Stomach (tissue), 19 donors: ENCODE measurements at regions of chr11 and their contacts with region 1.

Region 1: GRCh38 chr11:61384271-61385242 is 7.8 kb upstream of the TMEM216 start:
- DNase-seq: peak in 1 of 2 donors; percentile 30
- H3K4me3 ChIP-seq: no peak overlapping the region
- H3K27ac ChIP-seq: no peak overlapping the region
- H3K4me1 ChIP-seq: peaks cover 0 to 14% (median 9%) of the 10 kb centered on the region in 4 donors
- H3K27me3 ChIP-seq: no peaks in the 10 kb centered on the region
- CTCF ChIP-seq: peak in 1 of 7 experiments; percentile 9
- EP300 ChIP-seq: no peak
- POLR2A ChIP-seq: no peak

Region 2: GRCh38 chr11:61342207-61342803 is 42.3 kb before region 1 on chr11:
- intact Hi-C with region 1: loop called (anchors 5 kb)
- DNase-seq: no peak
- H3K4me3 ChIP-seq: no peak overlapping the region
- H3K27ac ChIP-seq: no peak overlapping the region
- H3K4me1 ChIP-seq: peaks cover 7 to 27% (median 20%) of the 10 kb centered on the region in 4 donors
- H3K27me3 ChIP-seq: no peaks in the 10 kb centered on the region
- CTCF ChIP-seq: no peak
- EP300 ChIP-seq: no peak
- POLR2A ChIP-seq: no peak

Region 3: GRCh38 chr11:61429691-61430582 is 45.4 kb after region 1 on chr11 and contains the starts of genes CPSF7 and SDHAF2:
- intact Hi-C with region 1: no loop called
- DNase-seq: peak; percentile 98 to 99
- H3K4me3 ChIP-seq: peak within 1 kb of the TSS; percentile 89 to 95 (median 94)
- H3K27ac ChIP-seq: peak within 1 kb of the TSS; percentile 98 to 99 (median 99)
- H3K4me1 ChIP-seq: peaks cover 30 to 87% (median 60%) of the 10 kb centered on the region in 4 donors
- H3K27me3 ChIP-seq: no peaks in the 10 kb centered on the region
- CTCF ChIP-seq: no peak
- EP300 ChIP-seq: no peak
- POLR2A ChIP-seq: no peak
- total RNA-seq, gene CPSF7: 22.3 to 249 (median 46.1) TPM
- total RNA-seq, gene SDHAF2: 11.6 to 125 (median 40.6) TPM